ENCODE measurements at regions of chr5 and their contacts with region 1.

Region 1: DNA sequence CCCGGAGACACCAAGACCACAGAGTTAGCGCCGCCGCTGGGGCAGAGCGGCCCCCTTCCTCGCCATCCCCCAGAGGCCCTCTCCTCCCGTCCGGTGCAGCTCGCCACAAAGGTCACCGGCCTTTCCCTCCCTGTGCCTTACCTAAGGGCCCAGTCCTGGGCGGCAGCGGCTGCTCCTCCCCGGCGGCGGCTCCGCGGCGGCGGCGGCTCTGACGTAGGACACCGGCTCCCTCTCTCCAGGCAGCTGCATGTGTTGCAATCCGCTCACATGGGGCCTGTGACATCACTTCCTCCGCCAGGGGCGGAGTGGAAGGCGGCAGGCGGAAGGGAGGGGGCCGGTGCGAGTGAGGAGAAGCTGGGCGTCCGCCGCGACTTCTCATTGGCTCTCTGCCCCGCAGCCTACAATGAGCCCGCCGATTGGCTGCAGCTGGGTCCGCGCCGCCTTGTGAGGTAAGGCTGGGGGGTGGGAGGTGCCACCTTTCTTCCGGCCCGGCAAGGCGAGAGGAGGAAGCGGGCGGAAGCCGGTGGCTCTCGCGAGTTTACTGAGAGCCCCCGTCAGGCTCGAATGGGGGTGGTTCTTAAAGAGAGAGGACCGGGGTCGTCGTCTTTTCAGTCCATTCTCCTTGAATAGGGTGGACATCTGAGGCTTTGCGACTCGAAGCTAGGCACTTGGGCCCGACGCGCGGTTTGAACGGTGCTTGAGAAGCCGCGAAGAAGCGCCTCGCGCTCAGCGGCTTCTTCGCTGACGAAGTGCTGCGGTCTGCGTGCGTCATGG is at the start of gene ETF1:
- DNase-seq: peak; percentile 100
- H3K4me3 ChIP-seq: peak within 1 kb of the TSS; percentile 70 to 100 (median 95)
- H3K27ac ChIP-seq: peak within 1 kb of the TSS; percentile 73 to 99 (median 96)
- H3K27me3 ChIP-seq: no peaks in the 10 kb centered on the region
- CTCF ChIP-seq: peak in 33 of 56 donors; percentile 4 to 60 (median 29)
- total RNA-seq, gene ETF1: 35.2 to 73.6 (median 57.5) TPM

Region 2: DNA sequence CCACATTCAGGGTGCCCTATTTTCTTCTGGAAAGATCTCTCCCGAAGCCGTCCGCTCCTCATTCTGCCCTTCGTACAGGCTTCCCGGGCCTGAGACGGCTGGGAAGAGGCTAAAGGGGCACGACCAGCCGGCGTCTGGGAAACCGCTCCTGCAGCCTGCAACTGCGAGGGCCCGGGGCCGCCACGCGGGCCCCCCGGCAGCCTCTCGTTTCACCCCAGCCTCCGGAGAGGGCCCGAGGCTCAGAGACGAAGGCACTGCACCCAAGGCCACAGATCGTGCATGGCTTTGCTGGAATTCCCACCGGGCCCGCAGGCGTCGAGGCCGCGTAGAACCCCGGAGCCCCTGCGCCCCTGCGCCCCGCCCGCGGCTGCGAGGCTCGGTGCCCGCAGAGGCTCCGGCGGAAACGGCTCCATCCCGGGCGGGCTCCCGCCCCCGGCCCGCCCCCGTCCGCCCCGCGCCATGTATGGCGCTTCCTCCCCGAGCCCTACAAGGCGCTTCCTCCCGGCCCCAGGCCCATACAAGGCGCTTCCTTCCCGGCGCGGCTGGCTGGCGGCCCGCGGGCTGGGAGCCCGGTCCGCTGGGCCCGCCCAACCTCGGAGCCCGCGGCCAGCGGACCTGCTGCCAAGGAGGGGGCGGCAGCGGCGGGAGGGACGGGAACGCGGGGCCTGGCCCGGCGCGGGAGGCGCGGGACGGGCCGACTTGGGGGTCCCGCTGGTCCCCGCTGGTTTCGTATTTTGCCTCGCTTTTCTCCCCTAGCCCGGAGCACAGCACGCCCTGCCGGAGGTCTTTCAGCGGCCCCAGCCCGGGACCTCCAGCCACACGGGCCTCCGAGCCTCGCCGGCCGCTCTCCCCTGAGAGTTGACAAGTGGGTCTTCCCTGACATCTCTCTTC is 51.2 kb before region 1 on chr5:
- intact Hi-C with region 1: loop called (anchors 5 kb)
- DNase-seq: peak; percentile 81 to 96 (median 92)
- H3K4me3 ChIP-seq: peak overlapping the region; percentile 41 to 79 (median 68)
- H3K27ac ChIP-seq: peak overlapping the region in 51 of 59 donors; percentile 4 to 89 (median 66)
- H3K27me3 ChIP-seq: peaks cover 0 to 37% (median 3%) of the 10 kb centered on the region in 45 donors
- CTCF ChIP-seq: peak in 15 of 56 donors; percentile 5 to 46 (median 23)

Region 3: GRCh38 chr5:138575194-138576015 is 32.3 kb after region 1 on chr5 and contains the start of gene HSPA9:
- intact Hi-C with region 1: loop called (anchors 1 kb)
- DNase-seq: peak; percentile 97 to 99 (median 98)
- H3K4me3 ChIP-seq: peak within 1 kb of the TSS; percentile 74 to 100 (median 98)
- H3K27ac ChIP-seq: peak within 1 kb of the TSS; percentile 94 to 100 (median 100)
- H3K27me3 ChIP-seq: no peaks in the 10 kb centered on the region
- CTCF ChIP-seq: peak in 38 of 56 donors; percentile 8 to 50 (median 22)
- total RNA-seq, gene HSPA9: 167 to 280 (median 215) TPM